Colonic mucosa (tissue), 4 donors: ENCODE measurements at regions of chr19 and their contacts with region 1.

Region 1: GRCh38 chr19:10928525-10929401 is at the starts of genes TIMM29 and YIPF2:
- DNase-seq: peak; percentile 99
- H3K4me3 ChIP-seq: peak within 1 kb of the TSS; percentile 98
- H3K27ac ChIP-seq: peak within 1 kb of the TSS; percentile 91
- H3K4me1 ChIP-seq: peaks cover 3% of the 10 kb centered on the region
- H3K27me3 ChIP-seq: no peaks in the 10 kb centered on the region
- CTCF ChIP-seq: no peak
- total RNA-seq, gene TIMM29: 25.5 to 31.5 TPM
- total RNA-seq, gene YIPF2: 64.4 to 71.3 TPM

Region 2: GRCh38 chr19:10870955-10871603 is 57.7 kb before region 1 on chr19 and contains the start of gene CARM1:
- intact Hi-C with region 1: loop called (anchors 5 kb)
- DNase-seq: peak; percentile 100
- H3K4me3 ChIP-seq: peak within 1 kb of the TSS; percentile 65
- H3K27ac ChIP-seq: peak within 1 kb of the TSS; percentile 75
- H3K4me1 ChIP-seq: no peaks in the 10 kb centered on the region
- H3K27me3 ChIP-seq: no peaks in the 10 kb centered on the region
- CTCF ChIP-seq: no peak
- total RNA-seq, gene CARM1: 53.3 to 75.9 TPM